ENCODE measurements at regions of chrX and their contacts with region 1.

Region 1: GRCh38 chrX:129825746-129826505 is 17.8 kb downstream of the ZDHHC9 start:
- DNase-seq: no peak
- ATAC-seq: no peak

Region 2: DNA sequence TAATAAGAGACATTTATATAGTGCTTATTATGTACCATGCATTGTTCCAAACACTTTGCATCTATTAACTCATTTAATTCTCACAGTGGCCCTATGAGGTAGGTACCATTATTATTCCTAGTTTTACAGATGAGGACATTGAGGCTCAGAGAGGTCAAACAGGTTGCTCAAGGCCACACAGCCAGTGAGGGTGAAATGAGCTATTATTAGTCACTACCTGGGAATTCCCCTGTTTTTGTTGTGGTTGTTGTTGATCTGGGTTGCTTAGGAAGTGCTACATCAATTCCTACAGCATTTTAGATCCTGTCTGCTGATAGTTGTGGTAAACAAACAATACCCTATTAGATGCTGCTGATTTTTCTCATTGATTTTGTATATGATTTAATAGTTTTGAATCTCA is 212.3 kb before region 1 on chrX:
- intact Hi-C with region 1: loop called (anchors 5 kb)
- DNase-seq: no peak
- ATAC-seq: no peak